OCI-LY7 (cell line): ENCODE measurements at regions of chr17 and their contacts with region 1.

Region 1: GRCh38 chr17:82450170-82451106 is at the start of gene CYBC1:
- DNase-seq: peak; percentile 99
- H3K4me3 ChIP-seq: peak within 1 kb of the TSS; percentile 80
- H3K27ac ChIP-seq: peak within 1 kb of the TSS; percentile 98
- H3K4me1 ChIP-seq: peaks cover 40% of the 10 kb centered on the region
- CTCF ChIP-seq: no peak
- total RNA-seq, gene CYBC1: 424 and 470 TPM in 2 replicates

Region 2: DNA sequence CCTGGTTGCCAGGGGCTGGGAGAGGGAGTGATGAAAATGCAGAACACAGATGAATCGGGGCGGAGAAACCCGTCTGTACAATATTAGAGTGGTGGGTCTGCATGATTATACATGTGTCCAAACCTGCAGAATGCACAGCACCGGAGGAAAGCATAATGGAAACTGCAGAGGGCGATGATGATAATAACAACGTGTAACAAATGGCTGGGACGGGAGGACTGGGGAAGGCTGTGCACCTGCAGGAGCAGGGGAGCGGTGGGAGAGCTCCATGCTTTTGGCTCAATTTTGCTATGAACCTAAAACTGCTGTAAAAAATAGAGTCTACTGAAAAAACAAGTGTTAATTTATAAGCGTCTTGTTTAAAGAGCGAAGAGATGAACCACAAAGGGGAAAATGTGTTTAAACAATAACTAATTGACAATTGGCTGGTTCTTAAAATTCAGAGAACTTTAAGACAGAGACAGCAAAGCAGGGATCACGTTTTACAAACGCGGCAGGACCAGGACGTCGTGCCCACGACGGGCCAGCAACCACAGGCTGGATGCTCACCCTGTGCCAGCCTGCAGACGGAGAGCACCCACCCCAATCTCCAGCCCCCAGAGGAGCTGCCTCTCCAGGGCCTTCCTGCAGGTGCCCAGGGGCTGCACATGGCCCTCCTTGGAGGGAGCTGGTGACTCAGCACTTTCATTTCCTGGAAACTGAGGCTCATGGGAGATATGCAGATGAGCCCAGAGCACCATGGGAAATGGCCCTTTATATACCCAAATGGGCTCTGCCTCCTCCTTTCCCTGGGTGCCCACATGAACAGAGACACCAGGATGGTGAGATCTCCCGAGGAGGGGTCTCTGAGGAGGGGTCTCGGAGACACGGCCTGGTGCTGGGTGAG is 91.7 kb before region 1 on chr17 and contains the start of gene TEX19:
- CTCF ChIA-PET with region 1: no interaction called
- POLR2A ChIA-PET with region 1: no interaction called
- intact Hi-C with region 1: loop called (anchors 2 kb)
- DNase-seq: peak; percentile 82
- H3K4me3 ChIP-seq: peak within 1 kb of the TSS; percentile 13
- H3K27ac ChIP-seq: peak within 1 kb of the TSS; percentile 59
- H3K4me1 ChIP-seq: peaks cover 54% of the 10 kb centered on the region
- CTCF ChIP-seq: peak; percentile 69
- total RNA-seq, gene TEX19: 2.6 and 3.4 TPM in 2 replicates

Region 3: GRCh38 chr17:82370471-82371332 is 79.7 kb before region 1 on chr17:
- CTCF ChIA-PET with region 1: no interaction called
- POLR2A ChIA-PET with region 1: interaction called, 3 read pairs
- intact Hi-C with region 1: loop called (anchors 2 kb)
- DNase-seq: peak; percentile 87
- H3K4me3 ChIP-seq: peak overlapping the region; percentile 48
- H3K27ac ChIP-seq: peak overlapping the region; percentile 80
- H3K4me1 ChIP-seq: peaks cover 59% of the 10 kb centered on the region
- CTCF ChIP-seq: no peak

Region 4: GRCh38 chr17:82399601-82400101 is 50.8 kb before region 1 on chr17:
- CTCF ChIA-PET with region 1: no interaction called
- POLR2A ChIA-PET with region 1: no interaction called
- intact Hi-C with region 1: no loop called
- DNase-seq: no peak
- H3K4me3 ChIP-seq: no peak overlapping the region
- H3K27ac ChIP-seq: no peak overlapping the region
- H3K4me1 ChIP-seq: peaks cover 29% of the 10 kb centered on the region
- CTCF ChIP-seq: no peak

Region 5: DNA sequence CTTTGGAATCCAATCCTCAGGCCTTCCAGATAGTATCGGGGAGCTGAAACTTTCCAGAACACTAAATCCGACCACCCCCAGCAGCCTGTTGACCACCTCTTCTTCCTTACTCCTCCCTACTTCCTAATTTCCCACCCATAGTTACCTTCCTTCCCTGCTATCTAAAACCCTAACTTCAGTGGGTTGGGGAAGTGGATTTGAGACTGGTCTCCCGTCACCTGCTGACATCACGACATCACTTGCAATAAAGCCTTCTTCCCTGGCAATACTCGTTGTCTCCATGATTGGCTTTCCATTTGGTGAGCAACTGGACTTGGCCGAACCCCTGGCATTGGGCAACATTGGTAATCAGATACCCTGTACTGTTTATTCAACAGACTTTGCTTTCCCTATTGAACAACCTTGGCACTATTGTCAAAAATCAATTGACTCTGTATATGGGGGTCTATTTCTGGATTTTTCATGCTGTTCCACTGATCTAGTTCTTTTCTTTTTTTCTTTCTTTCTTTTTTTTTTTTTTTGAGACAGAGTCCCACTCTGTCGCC is 57.3 kb after region 1 on chr17:
- CTCF ChIA-PET with region 1: no interaction called
- POLR2A ChIA-PET with region 1: interaction called, 11 read pairs
- intact Hi-C with region 1: no loop called
- DNase-seq: no peak
- H3K4me3 ChIP-seq: no peak overlapping the region
- H3K27ac ChIP-seq: peak overlapping the region; percentile 81
- H3K4me1 ChIP-seq: peaks cover 43% of the 10 kb centered on the region
- CTCF ChIP-seq: no peak

Region 6: DNA sequence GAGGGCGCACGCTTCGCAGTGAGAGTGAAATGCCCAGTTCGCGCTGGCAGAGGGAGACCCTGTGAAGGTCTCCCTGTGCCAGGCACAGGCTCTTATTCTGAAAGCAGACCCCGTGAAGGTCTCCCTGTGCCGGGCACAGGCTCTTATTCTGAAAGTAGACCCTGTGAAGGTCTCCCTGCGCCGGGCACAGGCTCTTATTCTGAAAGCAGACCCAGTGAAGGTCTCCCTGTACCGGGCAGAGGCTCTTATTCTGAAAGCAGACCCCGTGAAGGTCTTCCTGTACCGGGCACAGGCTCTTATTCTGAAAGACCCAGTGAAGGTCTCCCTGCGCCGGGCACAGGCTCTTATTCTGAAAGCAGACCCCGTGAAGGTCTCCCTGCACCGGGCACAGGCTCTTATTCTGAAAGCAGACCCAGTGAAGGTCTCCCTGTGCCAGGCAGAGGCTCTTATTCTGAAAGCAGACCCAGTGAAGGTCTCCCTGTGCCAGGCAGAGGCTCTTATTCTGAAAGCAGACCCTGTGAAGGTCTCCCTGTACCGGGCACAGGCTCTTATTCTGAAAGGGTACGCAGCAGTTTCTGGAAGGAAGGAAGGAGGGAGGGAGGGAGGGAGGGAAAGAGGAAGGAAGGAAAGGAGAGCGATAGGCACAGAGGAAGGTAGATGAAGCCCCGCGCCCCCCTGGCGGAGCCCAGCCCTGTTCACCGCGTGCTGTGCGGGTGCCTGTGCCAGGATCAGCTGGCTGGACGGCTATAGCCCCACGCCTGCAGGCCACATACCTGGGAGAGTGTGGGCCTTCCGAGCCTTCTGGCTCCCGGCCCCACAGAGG is 142.5 kb after region 1 on chr17:
- CTCF ChIA-PET with region 1: no interaction called
- POLR2A ChIA-PET with region 1: no interaction called
- intact Hi-C with region 1: no loop called
- DNase-seq: peak; percentile 87
- H3K4me3 ChIP-seq: peak overlapping the region; percentile 57
- H3K27ac ChIP-seq: peak overlapping the region; percentile 74
- H3K4me1 ChIP-seq: peaks cover 20% of the 10 kb centered on the region
- CTCF ChIP-seq: no peak

Region 7: DNA sequence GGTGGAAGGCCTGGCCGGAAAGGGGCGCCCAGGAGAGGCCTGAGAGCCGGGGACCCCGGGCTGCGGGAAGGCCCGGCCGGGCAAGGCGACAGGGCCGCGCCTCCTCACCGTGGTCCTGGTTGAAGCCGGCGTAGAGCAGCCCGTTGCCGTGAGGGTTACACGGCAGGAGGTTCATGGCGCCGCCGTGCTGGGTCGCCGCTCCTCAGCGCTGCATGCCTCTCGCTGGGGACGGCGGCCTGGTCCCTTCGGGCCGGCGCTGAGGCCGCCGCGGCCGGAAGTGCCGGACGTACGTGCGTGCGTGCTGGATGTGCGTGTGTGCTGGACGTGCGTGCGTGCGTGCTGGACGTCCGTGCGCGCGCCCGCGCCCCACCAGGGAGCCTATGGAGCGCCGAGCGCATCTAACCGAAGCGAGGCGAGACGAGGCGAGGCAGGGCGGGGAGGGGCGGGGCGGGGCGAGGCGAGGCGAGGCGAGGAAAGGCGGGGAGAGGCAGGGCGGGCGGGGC is 197.8 kb after region 1 on chr17 and contains the start of gene WDR45B:
- CTCF ChIA-PET with region 1: no interaction called
- POLR2A ChIA-PET with region 1: no interaction called
- intact Hi-C with region 1: loop called (anchors 2 kb)
- DNase-seq: peak; percentile 99
- H3K4me3 ChIP-seq: peak within 1 kb of the TSS; percentile 90
- H3K27ac ChIP-seq: peak within 1 kb of the TSS; percentile 89
- H3K4me1 ChIP-seq: peaks cover 14% of the 10 kb centered on the region
- CTCF ChIP-seq: no peak
- total RNA-seq, gene WDR45B: 59.0 and 61.7 TPM in 2 replicates